ENCODE measurements at regions of chr19 and their contacts with region 1.

Region 1: DNA sequence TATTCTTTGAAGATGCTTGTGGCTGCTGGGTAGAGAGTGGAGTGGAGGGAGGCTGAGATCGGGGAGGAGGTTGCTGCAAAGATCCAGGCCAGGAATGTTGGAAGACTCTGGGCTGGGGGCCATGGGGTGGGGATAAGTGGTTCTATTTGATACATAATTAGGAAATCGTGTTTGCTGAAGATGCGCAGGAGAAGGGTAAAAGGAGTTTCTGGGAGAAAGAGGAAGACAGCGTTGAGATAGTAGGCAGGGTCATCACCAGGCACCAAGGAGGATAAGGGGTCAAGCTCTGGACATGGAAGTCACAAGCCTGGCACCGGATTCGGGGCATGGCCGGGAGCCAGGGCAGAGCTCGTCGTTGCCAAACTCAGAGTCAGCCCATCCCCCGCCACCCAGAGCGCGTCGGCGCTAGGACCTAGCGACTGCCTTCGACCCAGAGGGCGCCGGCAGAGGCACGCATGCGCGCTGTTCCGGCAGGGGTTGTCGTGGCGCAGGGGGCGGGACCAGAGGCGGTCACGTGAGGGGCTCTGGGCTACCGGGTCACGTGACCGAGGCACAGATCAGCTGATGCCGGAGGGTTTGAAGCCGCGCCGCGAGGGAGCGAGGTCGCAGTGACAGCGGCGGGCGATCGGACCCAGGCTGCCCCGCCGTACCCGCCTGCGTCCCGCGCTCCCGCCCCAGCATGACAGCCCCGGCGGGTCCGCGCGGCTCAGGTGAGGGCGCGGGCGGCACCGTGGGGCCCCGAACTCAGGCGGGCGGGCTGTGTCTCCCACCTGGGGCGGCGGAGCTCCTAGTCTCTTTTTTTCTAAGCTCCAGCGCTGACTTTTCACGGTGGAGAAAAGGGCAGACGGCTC is at the start of gene MCOLN1:
- DNase-seq: peak; percentile 100
- CTCF ChIP-seq: no peak

Region 2: DNA sequence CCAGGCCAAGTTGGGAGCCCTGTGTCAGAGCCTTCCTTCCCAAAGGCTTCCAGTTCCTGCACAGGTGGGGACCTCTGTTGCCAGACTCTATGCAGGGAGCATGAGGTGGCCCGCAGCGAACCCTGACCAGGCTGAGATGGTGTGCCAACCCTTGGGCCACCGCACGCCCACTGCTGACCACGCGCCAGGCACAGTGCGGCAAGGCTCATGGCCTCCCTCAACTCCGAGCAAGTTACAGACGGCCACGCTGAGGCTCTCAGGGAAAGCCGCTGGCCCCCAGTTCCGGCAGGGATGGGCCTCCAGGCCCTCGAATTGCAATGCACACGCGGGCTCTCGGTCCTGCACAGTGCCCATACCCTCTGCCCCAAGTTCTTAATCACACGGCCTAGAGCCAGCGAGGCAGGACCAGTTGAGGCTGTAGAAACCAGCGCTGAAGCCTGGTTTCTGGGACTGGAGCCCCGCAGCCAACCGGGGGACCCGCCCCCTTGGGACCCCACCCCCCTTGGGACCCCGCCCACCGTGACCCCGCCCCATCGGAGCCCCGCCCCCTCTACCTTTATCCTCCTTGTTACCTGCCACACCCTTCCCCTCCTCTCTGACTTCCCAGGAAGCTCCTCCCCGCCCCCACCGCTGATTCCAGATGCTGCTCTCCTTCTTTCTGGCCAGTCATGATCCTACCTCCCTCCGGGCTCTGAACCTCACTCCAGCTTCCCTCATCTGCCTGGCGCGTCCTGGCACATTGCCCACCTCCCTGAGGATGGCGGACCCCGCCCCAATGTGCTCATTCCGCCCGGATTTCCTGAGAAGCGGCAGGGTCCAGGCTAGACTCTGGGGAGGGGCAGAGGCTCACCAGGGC is 39.5 kb before region 1 on chr19:
- CTCF ChIA-PET with region 1: no interaction called
- POLR2A ChIA-PET with region 1: no interaction called
- DNase-seq: no peak
- CTCF ChIP-seq: no peak

Region 3: GRCh38 chr19:7535035-7535992 is 13.0 kb after region 1 on chr19 and contains the start of gene PNPLA6:
- CTCF ChIA-PET with region 1: interaction called, 8 read pairs
- POLR2A ChIA-PET with region 1: interaction called, 16 read pairs
- DNase-seq: peak; percentile 96
- CTCF ChIP-seq: no peak

Region 4: DNA sequence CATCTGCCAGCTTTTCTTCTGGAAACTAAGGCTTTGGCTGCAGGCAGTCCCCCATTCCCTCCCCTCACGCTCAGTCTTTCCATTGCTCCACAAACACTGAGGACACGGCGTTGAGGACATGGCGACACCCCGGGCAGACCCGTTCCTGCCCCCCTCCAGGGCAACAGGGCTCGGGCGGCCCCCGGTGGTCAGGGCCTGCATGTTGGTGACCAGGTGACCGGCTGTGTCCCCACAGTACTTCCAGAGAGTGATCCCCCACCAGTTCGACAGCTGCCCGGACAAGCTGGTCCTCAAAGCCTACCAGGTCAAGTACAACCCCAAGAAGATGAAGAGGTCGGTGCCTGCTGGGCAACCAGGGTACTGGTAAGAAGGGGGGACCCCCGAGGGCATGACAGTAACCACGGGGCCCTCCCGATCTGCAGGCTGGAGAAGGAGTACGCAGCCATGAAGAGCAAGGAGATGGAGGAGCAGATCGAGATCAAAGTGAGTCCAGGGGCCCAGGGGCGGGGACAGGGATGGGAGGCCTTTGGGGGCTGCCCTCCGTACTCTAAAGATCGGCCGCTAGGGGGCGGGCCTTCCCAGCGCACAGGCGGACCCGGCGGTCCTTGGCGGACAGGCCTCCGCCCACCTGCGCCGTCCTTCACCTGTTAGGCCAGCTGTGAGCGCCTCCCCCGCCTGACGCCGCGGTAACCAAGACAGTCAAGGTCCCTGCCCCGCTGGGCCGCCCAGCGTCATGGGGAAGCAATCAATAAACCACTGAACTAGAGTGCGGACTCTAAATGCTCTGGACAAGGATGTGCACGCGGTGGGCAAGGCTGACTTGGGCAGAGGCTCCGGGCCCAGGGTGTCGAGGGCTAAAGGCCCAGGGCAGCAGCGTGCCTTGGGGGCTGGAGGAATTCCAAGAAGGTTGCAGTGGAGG is 330.8 kb after region 1 on chr19:
- CTCF ChIA-PET with region 1: no interaction called
- POLR2A ChIA-PET with region 1: no interaction called
- DNase-seq: peak; percentile 93
- CTCF ChIP-seq: peak; percentile 75